Activated CD4-positive, alpha-beta T cell treated with anti-CD3 and anti-CD28 coated beads for 36 hours (primary cell): ENCODE measurements at regions of chr10 and their contacts with region 1.

Region 1: GRCh38 chr10:110497438-110498086 is at the start of gene DUSP5:
- DNase-seq: peak; percentile 97
- ATAC-seq: peak; percentile 68
- H3K4me3 Mint-ChIP-seq: peak within 1 kb of the TSS; percentile 95
- H3K27ac Mint-ChIP-seq: peak within 1 kb of the TSS; percentile 92
- H3K4me1 Mint-ChIP-seq: peaks cover 46% of the 10 kb centered on the region
- H3K27me3 Mint-ChIP-seq: no peaks in the 10 kb centered on the region
- total RNA-seq, gene DUSP5: 60.9 to 70.7 TPM

Region 2: DNA sequence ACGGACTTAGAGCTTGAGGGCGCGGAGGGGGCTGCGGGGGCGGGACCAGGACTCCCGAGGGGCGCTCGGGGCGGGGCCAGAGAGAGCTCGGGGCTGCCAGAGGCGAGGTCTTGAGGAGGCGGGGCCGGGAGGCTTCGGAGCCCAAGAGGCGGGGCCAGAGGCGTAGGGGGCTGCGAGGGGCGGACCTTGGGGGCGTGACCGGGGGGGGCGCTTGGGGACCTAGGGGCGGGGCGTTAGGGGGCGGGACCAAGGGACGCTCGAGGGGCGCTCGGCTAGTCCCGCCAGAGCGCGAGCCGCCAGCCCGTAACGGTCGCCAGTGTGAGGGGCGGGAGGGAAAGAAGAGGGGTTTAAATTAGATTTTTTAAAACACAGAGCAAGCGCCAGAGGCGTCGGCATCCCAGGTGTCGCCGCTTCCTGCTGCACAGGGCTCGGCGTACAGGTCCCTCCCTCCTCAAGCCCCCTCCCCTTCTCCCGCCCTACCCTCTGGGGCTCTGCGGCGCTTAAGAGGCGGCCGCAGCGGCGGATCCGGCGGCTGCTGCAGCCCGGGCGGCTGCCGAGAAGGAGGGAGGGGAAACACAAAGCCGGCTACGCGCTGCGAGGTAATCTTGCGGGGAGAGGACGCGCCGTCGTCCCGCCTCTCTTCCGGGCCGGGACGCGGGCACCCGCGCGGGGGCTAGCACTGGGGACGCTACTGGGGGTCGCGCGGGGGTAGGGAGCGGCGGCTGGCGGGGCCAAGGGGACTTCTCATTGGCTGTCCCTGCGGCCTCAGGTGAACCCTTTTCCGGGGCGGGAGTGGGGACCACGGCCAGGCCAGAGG is 489.7 kb before region 1 on chr10 and contains the start of gene ADD3:
- CTCF ChIA-PET with region 1: no interaction called
- POLR2A ChIA-PET with region 1: no interaction called
- intact Hi-C with region 1: loop called in 1 of 2 experiments (anchors 2 kb)
- DNase-seq: peak; percentile 94
- ATAC-seq: peak; percentile 65
- H3K4me3 Mint-ChIP-seq: no peak within 1 kb of the TSS
- H3K27ac Mint-ChIP-seq: peak within 1 kb of the TSS; percentile 94
- H3K4me1 Mint-ChIP-seq: peaks cover 49% of the 10 kb centered on the region
- H3K27me3 Mint-ChIP-seq: no peaks in the 10 kb centered on the region
- total RNA-seq, gene ADD3: 72.5 to 101 TPM

Region 3: GRCh38 chr10:110304780-110305421 is 192.7 kb before region 1 on chr10 and contains the start of gene SMNDC1:
- CTCF ChIA-PET with region 1: interaction called, 5 read pairs
- POLR2A ChIA-PET with region 1: no interaction called
- intact Hi-C with region 1: loop called (anchors 1 kb)
- DNase-seq: peak; percentile 98
- ATAC-seq: peak; percentile 93
- H3K4me3 Mint-ChIP-seq: peak within 1 kb of the TSS; percentile 95
- H3K27ac Mint-ChIP-seq: peak within 1 kb of the TSS; percentile 98
- H3K4me1 Mint-ChIP-seq: peaks cover 42% of the 10 kb centered on the region
- H3K27me3 Mint-ChIP-seq: no peaks in the 10 kb centered on the region
- total RNA-seq, gene SMNDC1: 44.2 to 56.7 TPM

Region 4: GRCh38 chr10:110368002-110368401 is 129.6 kb before region 1 on chr10:
- CTCF ChIA-PET with region 1: interaction called, 3 read pairs
- POLR2A ChIA-PET with region 1: interaction called, 3 read pairs
- intact Hi-C with region 1: loop called in 1 of 2 experiments (anchors 2 kb)
- DNase-seq: peak; percentile 27
- ATAC-seq: no peak
- H3K4me3 Mint-ChIP-seq: no peak overlapping the region
- H3K27ac Mint-ChIP-seq: no peak overlapping the region
- H3K4me1 Mint-ChIP-seq: peaks cover 70% of the 10 kb centered on the region
- H3K27me3 Mint-ChIP-seq: no peaks in the 10 kb centered on the region

Region 5: DNA sequence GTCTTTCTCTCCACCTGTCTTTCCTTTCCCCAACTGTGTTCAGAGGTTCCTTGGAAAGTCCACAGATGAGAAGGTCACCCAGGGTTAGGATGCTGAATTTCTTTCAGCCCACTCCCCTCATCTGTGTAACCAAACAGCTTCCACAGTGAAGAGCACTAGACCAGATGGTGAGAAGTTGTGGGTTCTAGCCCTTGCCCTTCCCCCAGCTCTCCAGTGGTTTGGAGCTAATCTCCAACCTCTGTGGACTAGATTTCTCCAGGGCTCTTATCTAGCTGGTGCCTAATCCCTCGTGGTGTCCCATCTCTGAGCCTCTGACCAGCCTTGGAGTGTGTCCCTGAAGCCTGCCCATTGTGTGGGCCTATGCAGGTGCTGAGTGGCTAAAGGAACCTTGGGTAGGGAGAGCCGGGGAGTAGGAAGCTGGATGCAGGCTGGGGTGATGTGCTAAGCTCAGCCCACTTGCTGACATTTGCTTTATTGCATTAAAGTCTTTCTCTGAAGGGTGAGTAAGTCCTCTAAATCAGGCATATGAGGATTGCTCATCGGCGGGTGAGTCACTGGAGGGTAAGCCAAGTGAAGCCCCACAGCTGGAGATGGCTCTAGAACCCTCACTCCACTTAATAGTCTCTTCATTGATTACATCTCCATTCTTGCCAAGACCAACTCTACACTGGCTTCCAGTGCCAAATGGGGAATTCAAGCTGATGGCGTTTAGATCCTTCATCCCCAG is 15.1 kb after region 1 on chr10:
- CTCF ChIA-PET with region 1: interaction called, 12 read pairs
- POLR2A ChIA-PET with region 1: interaction called, 12 read pairs
- intact Hi-C with region 1: no loop called
- DNase-seq: peak; percentile 80
- ATAC-seq: peak; percentile 97
- H3K4me3 Mint-ChIP-seq: no peak overlapping the region
- H3K27ac Mint-ChIP-seq: peak overlapping the region; percentile 81
- H3K4me1 Mint-ChIP-seq: peaks cover 51% of the 10 kb centered on the region
- H3K27me3 Mint-ChIP-seq: no peaks in the 10 kb centered on the region

Region 6: GRCh38 chr10:110567201-110568054 is 69.9 kb after region 1 on chr10 and contains the start of gene SMC3:
- CTCF ChIA-PET with region 1: interaction called, 4 read pairs
- POLR2A ChIA-PET with region 1: no interaction called
- intact Hi-C with region 1: loop called in 1 of 2 experiments (anchors 1 kb)
- DNase-seq: peak; percentile 95
- ATAC-seq: peak; percentile 84
- H3K4me3 Mint-ChIP-seq: peak within 1 kb of the TSS; percentile 93
- H3K27ac Mint-ChIP-seq: peak within 1 kb of the TSS; percentile 99
- H3K4me1 Mint-ChIP-seq: peaks cover 35% of the 10 kb centered on the region
- H3K27me3 Mint-ChIP-seq: peaks cover 13% of the 10 kb centered on the region
- total RNA-seq, gene SMC3: 76.8 to 83.5 TPM

Region 7: DNA sequence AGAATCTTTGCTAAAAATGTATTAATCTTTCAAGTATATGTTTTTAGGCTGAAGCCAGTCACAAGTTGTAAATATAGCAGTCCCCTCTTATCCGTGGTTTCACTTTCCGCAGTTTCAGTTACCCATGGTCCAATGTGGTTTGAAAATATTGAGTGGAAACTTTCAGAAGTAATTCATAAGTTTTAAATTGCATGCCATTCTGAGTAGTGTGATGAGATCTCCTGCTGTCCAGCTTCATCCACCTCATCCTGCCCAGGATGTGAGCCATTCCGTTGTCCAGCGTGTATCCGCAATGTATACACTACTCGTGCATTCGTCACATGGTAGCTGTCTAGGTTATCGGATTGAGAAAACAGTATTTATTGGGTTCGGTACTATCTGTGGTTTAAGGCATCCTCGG is 386.4 kb after region 1 on chr10:
- CTCF ChIA-PET with region 1: no interaction called
- POLR2A ChIA-PET with region 1: no interaction called
- intact Hi-C with region 1: no loop called
- DNase-seq: no peak
- ATAC-seq: peak; percentile 55
- H3K4me3 Mint-ChIP-seq: peak overlapping the region; percentile 46
- H3K27ac Mint-ChIP-seq: peak overlapping the region; percentile 78
- H3K4me1 Mint-ChIP-seq: peaks cover 65% of the 10 kb centered on the region
- H3K27me3 Mint-ChIP-seq: no peaks in the 10 kb centered on the region